Activated B cell treated with CpG ODN at 0.5 μM for 24 hours (primary cell): ENCODE measurements at regions of chr7 and their contacts with region 1.

Region 1: GRCh38 chr7:55641273-55641691 is 69.0 kb upstream of the VOPP1 start:
- DNase-seq: no peak
- ATAC-seq: peak; percentile 82
- H3K4me3 Mint-ChIP-seq: no peak overlapping the region
- H3K27ac Mint-ChIP-seq: no peak overlapping the region
- H3K4me1 Mint-ChIP-seq: peaks cover 8% of the 10 kb centered on the region
- H3K27me3 Mint-ChIP-seq: peaks cover 2% of the 10 kb centered on the region
- CTCF ChIP-seq: no peak

Region 2: DNA sequence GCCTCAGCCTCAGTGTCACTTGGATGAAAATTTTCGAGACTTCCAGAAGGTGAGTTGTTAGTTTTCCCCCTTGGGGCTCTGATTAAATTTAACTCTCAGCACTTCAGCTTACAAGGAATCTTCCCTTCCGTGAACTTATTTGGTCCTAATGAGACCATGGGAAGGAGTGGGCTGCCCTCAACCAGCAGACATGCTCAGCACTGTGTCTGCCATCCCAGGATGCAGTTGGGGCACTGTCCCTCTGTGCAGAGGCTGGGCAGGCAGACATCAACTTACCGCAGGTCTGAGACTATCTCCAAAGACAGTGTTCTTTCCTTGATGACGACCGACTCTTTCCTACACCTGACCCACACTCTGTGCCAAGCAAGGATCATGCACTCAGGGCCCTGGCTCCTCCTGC is 105.7 kb before region 1 on chr7:
- CTCF ChIA-PET with region 1: no interaction called
- POLR2A ChIA-PET with region 1: no interaction called
- intact Hi-C with region 1: no loop called
- DNase-seq: no peak
- ATAC-seq: no peak
- H3K4me3 Mint-ChIP-seq: peak overlapping the region; percentile 85
- H3K27ac Mint-ChIP-seq: peak overlapping the region; percentile 98
- H3K4me1 Mint-ChIP-seq: peaks cover 97% of the 10 kb centered on the region
- H3K27me3 Mint-ChIP-seq: no peaks in the 10 kb centered on the region
- CTCF ChIP-seq: no peak

Region 3: DNA sequence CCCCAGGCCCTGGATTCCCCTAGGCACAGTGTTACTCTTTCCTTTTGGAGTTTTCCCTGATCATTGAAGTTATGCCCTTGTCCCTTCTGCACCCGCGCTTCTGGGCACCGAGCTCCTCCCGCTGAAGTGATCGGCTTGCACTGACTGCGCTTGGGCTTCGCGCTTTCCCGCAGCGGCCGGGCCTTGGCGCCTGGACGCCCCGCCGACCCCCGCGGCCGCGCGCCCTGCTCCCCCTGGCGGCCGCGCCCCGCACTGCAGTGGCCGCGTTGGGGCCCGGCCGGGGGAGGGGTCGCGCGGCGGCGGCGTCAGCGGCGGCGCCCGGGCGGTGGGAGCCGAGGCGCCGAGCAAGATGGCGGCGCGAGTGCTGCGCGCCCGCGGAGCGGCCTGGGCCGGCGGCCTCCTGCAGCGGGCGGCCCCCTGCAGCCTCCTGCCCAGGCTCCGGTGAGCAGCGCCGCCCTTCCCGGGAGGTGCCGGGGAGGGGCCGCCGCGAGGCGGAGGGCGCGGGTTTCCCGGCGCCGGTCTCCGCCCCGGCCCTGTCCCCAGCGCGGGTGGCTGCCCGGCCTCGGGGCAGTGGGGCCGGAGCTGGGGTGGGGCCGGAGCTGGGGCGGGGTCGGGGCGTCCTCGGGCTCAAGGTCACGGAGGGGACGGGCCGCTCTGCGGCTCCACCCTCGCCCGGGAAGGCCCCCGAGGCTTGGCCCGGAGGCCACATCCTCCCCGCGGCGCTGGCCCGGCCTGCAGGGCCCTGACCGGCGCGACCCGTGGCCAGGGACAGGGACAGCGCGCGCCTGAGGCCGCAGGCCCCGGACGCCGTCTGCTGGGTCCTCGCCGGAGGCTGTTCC is 323.2 kb after region 1 on chr7 and contains the start of gene NIPSNAP2:
- CTCF ChIA-PET with region 1: interaction called, 3 read pairs
- POLR2A ChIA-PET with region 1: interaction called, 3 read pairs
- intact Hi-C with region 1: loop called (anchors 1 kb)
- DNase-seq: peak; percentile 79
- ATAC-seq: peak; percentile 88
- H3K4me3 Mint-ChIP-seq: peak within 1 kb of the TSS; percentile 86
- H3K27ac Mint-ChIP-seq: peak within 1 kb of the TSS; percentile 88
- H3K4me1 Mint-ChIP-seq: peaks cover 25% of the 10 kb centered on the region
- H3K27me3 Mint-ChIP-seq: no peaks in the 10 kb centered on the region
- CTCF ChIP-seq: no peak
- total RNA-seq, gene NIPSNAP2: 33.7 and 43.8 TPM in 2 replicates

Region 4: GRCh38 chr7:56009695-56010094 is 368.4 kb after region 1 on chr7:
- CTCF ChIA-PET with region 1: interaction called, 6 read pairs
- POLR2A ChIA-PET with region 1: no interaction called
- intact Hi-C with region 1: loop called (anchors 5 kb)
- DNase-seq: no peak
- ATAC-seq: no peak
- H3K4me3 Mint-ChIP-seq: no peak overlapping the region
- H3K27ac Mint-ChIP-seq: no peak overlapping the region
- H3K4me1 Mint-ChIP-seq: no peaks in the 10 kb centered on the region
- H3K27me3 Mint-ChIP-seq: no peaks in the 10 kb centered on the region
- CTCF ChIP-seq: no peak